Left cardiac atrium (tissue), 4 donors: ENCODE measurements at regions of chr3 and their contacts with region 1.

Region 1: DNA sequence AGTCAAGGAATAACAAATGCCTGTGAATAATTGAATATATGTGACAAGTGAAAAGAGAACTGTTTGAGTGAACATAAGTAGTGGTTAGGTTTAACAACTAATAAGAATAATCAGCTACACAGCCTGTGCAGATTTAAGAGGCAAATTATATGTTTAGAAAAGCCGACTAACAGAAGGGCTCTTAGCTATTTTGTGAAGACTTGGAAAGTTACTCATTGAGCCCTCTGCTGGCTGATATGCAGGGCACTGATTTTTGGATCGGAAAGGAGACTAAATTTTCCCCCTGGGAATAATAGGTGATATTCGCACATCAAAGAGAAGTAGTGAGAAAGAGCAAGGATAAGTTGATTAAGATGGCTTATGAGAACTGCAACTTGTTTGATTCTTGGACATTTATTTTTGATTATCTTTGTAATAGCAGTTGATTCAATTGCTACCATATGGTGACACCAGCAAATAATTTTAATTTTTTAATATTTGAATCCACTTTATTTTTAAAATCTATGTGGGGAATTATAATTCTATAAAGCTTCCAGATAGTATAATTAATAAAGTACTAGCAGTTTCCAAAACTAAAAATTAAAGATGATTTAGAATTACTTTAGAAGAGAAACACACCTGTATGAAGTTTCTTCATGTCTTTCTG is 156.2 kb downstream of the NLGN1 start:
- DNase-seq: no peak
- ATAC-seq: peak in 1 of 2 donors; percentile 38

Region 2: GRCh38 chr3:172808969-172809546 is 744.7 kb before region 1 on chr3:
- intact Hi-C with region 1: loop called (anchors 5 to 10 kb)
- DNase-seq: no peak
- ATAC-seq: no peak

Region 3: DNA sequence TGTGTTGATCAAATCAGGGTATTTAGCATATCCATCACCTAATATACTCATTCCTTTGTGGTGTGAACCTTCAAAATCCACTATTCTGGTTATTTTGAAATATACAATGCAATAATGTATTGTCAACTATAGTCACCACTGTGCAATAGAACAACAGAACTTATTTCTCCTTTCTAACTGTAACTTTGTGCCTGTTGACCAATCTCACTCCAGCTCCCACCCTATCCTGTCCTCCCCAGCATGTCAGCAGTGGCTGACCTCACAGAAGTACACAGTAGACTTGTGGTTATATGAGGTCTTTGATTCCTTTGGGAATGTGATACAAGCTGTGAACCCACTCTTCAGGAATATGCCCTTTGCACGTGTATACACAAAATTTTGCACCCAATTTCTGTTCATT is 739.0 kb before region 1 on chr3:
- intact Hi-C with region 1: loop called (anchors 5 to 10 kb)
- DNase-seq: no peak
- ATAC-seq: no peak

Region 4: DNA sequence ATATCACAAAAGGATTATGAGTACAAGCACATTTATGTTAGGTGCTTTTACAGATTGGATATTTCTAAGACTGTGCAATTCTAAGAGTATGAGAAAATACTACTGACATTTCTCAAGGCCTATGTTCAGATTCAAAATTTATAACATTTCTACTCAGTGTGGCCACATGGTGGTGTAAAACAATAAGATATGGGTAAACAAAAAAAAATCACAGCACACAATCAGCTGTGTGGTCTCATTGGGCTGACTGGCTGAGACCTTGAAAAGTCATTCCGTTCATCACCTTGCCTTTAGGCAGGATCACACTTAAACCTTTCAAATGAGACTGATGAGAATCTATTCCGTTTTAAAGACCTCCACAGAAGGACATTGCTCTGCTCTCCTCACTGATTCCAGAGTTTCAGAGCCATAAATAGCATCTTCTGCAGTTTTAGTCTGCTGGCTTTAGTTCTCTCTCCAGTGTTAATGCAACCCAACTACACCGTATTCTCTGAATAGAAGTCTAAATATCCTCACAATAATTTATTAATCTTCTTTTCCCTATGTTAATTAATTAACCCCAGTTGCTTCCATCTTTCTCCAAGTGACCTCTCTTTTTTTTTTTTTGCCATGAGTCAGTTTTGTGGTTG is 570.9 kb before region 1 on chr3:
- intact Hi-C with region 1: loop called in 1 of 2 experiments (anchors 5 kb)
- DNase-seq: no peak
- ATAC-seq: peak in 1 of 2 donors; percentile 34

Region 5: GRCh38 chr3:173371848-173372487 is 181.8 kb before region 1 on chr3:
- intact Hi-C with region 1: loop called in 1 of 2 experiments (anchors 10 kb)
- DNase-seq: no peak
- ATAC-seq: peak in 1 of 2 donors; percentile 24

Region 6: DNA sequence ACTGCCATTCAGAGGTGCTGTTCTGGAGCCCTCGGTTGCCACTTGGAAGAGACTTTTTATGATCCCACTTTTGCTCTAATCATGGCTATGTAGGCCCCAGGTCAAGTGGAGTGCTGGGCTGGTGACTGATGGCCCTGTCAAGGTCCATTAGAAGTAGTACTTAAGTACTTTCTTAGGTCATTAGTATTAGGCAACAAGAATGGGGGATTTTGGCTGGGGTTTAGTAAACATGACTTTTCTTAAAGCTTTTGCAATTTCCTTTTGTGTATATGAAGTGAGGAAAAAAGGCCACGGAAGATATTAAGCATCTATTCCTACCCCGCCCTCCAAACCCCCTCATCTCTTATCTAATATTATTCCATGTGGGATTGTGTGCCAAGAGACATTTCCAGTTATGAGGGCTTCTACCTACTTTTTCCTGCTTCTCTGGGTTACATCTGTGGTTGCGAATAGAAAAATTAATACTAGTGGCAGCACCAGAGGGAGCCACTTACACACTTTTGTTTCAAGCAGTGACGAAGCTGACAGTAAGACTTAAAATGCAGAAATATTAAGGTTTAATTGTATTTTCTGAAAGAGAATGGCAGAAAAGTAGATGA is 142.3 kb before region 1 on chr3:
- intact Hi-C with region 1: loop called in 1 of 2 experiments (anchors 2 kb)
- DNase-seq: no peak
- ATAC-seq: peak; percentile 50 to 56